ENCODE measurements at regions of chr10 and their contacts with region 1.

Region 1: GRCh38 chr10:7818295-7819122 is at the start of gene TAF3:
- DNase-seq: peak; percentile 89 to 95
- ATAC-seq: peak; percentile 95 to 99 (median 97)
- H3K4me3 ChIP-seq: peak within 1 kb of the TSS; percentile 89
- H3K4me3 Mint-ChIP-seq: peak within 1 kb of the TSS; percentile 97
- H3K27ac ChIP-seq: peak within 1 kb of the TSS; percentile 52
- H3K27ac Mint-ChIP-seq: peak within 1 kb of the TSS; percentile 70 to 89
- H3K4me1 ChIP-seq: peaks cover 17% of the 10 kb centered on the region
- H3K4me1 Mint-ChIP-seq: peaks cover 33% of the 10 kb centered on the region in 2 donors
- H3K27me3 ChIP-seq: no peaks in the 10 kb centered on the region
- H3K27me3 Mint-ChIP-seq: no peaks in the 10 kb centered on the region
- CTCF ChIP-seq: no peak
- total RNA-seq, gene TAF3: 14.5 to 17.0 (median 15.6) TPM

Region 2: GRCh38 chr10:7787857-7788638 is 30.5 kb before region 1 on chr10 and contains the starts of genes ATP5F1C and KIN:
- intact Hi-C with region 1: loop called (anchors 1 kb)
- DNase-seq: peak; percentile 96 to 99
- ATAC-seq: peak; percentile 96 to 98 (median 96)
- H3K4me3 ChIP-seq: peak within 1 kb of the TSS; percentile 87
- H3K4me3 Mint-ChIP-seq: no peak within 1 kb of the TSS
- H3K27ac ChIP-seq: peak within 1 kb of the TSS; percentile 63
- H3K27ac Mint-ChIP-seq: no peak within 1 kb of the TSS
- H3K4me1 ChIP-seq: peaks cover 19% of the 10 kb centered on the region
- H3K4me1 Mint-ChIP-seq: peaks cover 38 to 45% of the 10 kb centered on the region in 2 donors
- H3K27me3 ChIP-seq: no peaks in the 10 kb centered on the region
- H3K27me3 Mint-ChIP-seq: no peaks in the 10 kb centered on the region
- CTCF ChIP-seq: no peak
- total RNA-seq, gene ATP5F1C: 127 to 145 (median 135) TPM
- total RNA-seq, gene KIN: 12.3 to 16.6 (median 14.2) TPM

Measured in natural killer cell (primary cell).